ENCODE measurements at regions of chr6 and their contacts with region 1.

Region 1: DNA sequence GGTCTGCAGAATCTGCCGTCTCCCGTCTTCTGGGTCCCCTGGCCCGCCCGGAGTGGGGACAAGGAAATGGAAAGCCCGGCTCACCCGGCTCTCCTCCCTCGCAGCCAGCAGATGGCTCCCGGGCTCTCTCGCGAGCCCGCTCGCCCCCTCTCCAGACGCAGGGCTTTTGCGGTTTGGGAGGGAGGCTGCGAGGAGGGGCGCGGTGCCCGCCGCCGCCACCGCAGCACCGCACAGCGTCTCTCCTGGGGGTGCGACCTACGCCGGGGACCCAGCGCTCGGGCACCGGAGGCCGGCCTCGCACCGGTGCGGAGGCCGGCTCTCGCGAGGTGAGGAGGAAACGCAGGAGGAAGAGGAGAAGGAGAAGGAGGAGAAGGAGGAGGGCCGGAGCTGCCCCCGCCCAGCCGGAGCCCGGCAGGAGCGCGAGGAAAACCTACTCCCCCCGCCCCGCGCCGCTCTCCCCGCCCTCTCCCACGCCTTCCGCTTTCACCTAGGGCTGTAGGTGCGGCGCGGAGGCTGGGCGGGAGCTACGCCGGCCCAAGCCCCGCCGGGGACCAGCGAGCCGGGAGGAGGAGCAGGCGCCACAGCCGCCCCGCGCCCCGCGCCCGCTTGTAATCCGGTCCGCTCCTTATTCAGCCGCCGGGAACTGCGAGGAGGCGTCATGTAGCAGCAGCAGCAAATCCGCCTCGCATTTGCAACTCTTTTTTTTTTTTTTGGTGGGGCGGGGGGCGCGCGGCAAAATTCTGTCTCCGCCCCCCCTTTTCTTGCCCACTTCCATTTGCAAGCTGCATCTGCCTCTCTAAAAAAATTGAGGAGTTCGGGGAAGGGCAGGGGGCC is at the start of gene CARMIL1:
- DNase-seq: peak; percentile 91
- H3K4me3 ChIP-seq: peak within 1 kb of the TSS; percentile 85
- H3K27ac ChIP-seq: peak within 1 kb of the TSS; percentile 75
- H3K4me1 ChIP-seq: peaks cover 16% of the 10 kb centered on the region
- H3K27me3 ChIP-seq: no peaks in the 10 kb centered on the region
- CTCF ChIP-seq: peak; percentile 80
- total RNA-seq, gene CARMIL1: 7.2 and 7.9 TPM in 2 replicates

Region 2: DNA sequence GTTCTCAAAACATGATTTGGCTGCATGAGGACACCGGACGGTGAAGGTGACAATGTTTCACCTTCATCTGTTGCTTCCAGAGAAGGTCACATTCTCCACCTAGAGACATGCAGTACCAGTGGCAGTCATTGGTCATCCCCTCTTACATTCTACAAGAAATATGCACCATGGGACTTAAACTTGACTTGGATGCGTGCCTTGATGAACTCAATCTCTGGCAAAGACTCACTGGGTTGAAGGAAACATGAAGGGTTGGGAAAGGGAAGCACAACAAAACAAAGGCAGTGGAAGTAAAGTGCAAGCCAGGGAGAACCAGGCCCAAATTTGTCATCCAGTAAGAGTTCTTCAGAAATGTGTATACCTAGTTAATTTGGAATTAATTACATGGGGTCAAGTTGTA is 441.1 kb before region 1 on chr6:
- CTCF ChIA-PET with region 1: no interaction called
- POLR2A ChIA-PET with region 1: no interaction called
- intact Hi-C with region 1: no loop called
- DNase-seq: no peak
- H3K4me3 ChIP-seq: no peak overlapping the region
- H3K27ac ChIP-seq: no peak overlapping the region
- H3K4me1 ChIP-seq: peaks cover 3% of the 10 kb centered on the region
- H3K27me3 ChIP-seq: peaks cover 4% of the 10 kb centered on the region
- CTCF ChIP-seq: no peak

Region 3: DNA sequence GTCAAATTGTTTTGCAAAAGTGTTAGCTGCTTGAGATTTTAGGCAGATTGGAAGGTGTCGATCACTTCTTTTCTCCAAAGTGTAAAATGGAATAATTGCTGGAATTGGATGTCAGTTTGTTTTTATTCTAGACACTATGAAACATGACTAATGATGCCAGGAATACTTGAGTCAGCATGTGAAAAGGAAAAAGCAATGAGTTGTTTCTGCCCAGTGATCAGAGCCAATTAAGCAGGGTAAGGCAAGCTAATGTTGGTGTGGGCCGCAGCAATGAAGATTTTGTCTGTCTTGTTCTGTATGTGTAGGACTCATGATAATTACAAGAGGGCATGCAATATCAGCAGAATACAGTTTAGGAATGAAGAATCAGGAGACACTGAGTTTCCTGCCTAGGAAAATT is 110.3 kb after region 1 on chr6:
- CTCF ChIA-PET with region 1: no interaction called
- POLR2A ChIA-PET with region 1: no interaction called
- intact Hi-C with region 1: no loop called
- DNase-seq: peak; percentile 13
- H3K4me3 ChIP-seq: no peak overlapping the region
- H3K27ac ChIP-seq: no peak overlapping the region
- H3K4me1 ChIP-seq: no peaks in the 10 kb centered on the region
- H3K27me3 ChIP-seq: no peaks in the 10 kb centered on the region
- CTCF ChIP-seq: no peak

Region 4: GRCh38 chr6:25556516-25556915 is 277.4 kb after region 1 on chr6:
- CTCF ChIA-PET with region 1: interaction called, 20 read pairs
- POLR2A ChIA-PET with region 1: no interaction called
- intact Hi-C with region 1: loop called (anchors 1 kb)
- DNase-seq: peak; percentile 77
- H3K4me3 ChIP-seq: no peak overlapping the region
- H3K27ac ChIP-seq: no peak overlapping the region
- H3K4me1 ChIP-seq: no peaks in the 10 kb centered on the region
- H3K27me3 ChIP-seq: no peaks in the 10 kb centered on the region
- CTCF ChIP-seq: peak; percentile 88

Measured in A673 (cell line).